Caco-2 (cell line): ENCODE measurements at regions of chr6 and their contacts with region 1.

Region 1: GRCh38 chr6:6351511-6352025 is 31.1 kb upstream of the F13A1 start:
- DNase-seq: no peak
- H3K4me3 ChIP-seq: no peak overlapping the region
- H3K4me3 Mint-ChIP-seq: no peak overlapping the region
- H3K27ac Mint-ChIP-seq: no peak overlapping the region
- H3K4me1 ChIP-seq: no peaks in the 10 kb centered on the region
- H3K4me1 Mint-ChIP-seq: no peaks in the 10 kb centered on the region
- H3K27me3 ChIP-seq: no peaks in the 10 kb centered on the region
- H3K27me3 Mint-ChIP-seq: peaks cover 9% of the 10 kb centered on the region
- CTCF ChIP-seq: no peak

Region 2: GRCh38 chr6:8299034-8299433 is 1947.5 kb after region 1 on chr6:
- CTCF ChIA-PET with region 1: no interaction called
- POLR2A ChIA-PET with region 1: no interaction called
- intact Hi-C with region 1: loop called (anchors 10 kb)
- DNase-seq: no peak
- H3K4me3 ChIP-seq: no peak overlapping the region
- H3K4me3 Mint-ChIP-seq: no peak overlapping the region
- H3K27ac Mint-ChIP-seq: no peak overlapping the region
- H3K4me1 ChIP-seq: no peaks in the 10 kb centered on the region
- H3K4me1 Mint-ChIP-seq: no peaks in the 10 kb centered on the region
- H3K27me3 ChIP-seq: no peaks in the 10 kb centered on the region
- H3K27me3 Mint-ChIP-seq: no peaks in the 10 kb centered on the region
- CTCF ChIP-seq: no peak